Activated naive CD4-positive, alpha-beta T cell treated with anti-CD3 and anti-CD28 coated beads, Interleukin-2, amount 10 ng/mL, durations not matched to agents 7 days and 5 days (primary cell): ENCODE measurements at regions of chr1 and their contacts with region 1.

Region 1: DNA sequence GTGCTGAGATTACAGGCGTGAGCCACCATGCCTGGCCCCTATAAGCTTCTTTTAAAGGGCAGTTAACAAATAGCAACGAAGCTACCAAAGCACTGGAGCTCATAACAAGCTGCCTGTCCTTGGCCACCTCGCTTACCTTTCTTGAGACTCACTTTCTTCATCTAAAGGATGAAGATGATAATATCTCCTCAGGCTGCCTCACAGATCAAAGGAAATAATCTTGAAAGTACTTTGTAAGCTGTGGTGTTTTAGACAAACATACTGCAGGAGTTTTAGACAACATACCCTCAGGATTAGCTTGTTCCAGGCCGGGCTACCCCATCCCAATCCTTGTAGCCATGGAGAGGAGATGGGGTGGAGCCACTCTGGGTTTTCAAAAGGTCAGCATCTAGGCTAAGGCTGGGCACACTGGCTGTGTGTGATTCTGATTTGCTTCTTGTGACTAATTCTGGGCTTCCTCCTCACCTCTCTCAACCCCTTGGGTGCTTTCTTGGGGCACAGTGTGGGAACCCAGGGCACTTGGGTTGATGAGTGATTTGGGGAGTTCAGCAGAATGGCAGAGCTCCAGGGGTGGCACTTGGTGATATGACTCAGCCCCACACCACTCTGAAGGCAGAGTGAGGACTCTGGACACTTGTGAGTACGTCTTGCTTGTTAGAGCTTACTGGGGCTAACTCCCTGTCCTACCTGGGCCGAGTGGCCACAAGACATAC is 5.2 kb downstream of the GPR25 start:
- DNase-seq: peak; percentile 37
- H3K4me3 Mint-ChIP-seq: no peak overlapping the region
- H3K27ac Mint-ChIP-seq: peak overlapping the region; percentile 34
- H3K4me1 Mint-ChIP-seq: peaks cover 20% of the 10 kb centered on the region
- H3K27me3 Mint-ChIP-seq: peaks cover 58% of the 10 kb centered on the region

Region 2: GRCh38 chr1:200888349-200888838 is 10.4 kb after region 1 on chr1:
- CTCF ChIA-PET with region 1: interaction called, 13 read pairs
- DNase-seq: peak; percentile 78
- H3K4me3 Mint-ChIP-seq: no peak overlapping the region
- H3K27ac Mint-ChIP-seq: no peak overlapping the region
- H3K4me1 Mint-ChIP-seq: peaks cover 58% of the 10 kb centered on the region
- H3K27me3 Mint-ChIP-seq: peaks cover 64% of the 10 kb centered on the region